OCI-LY7 (cell line): ENCODE measurements at regions of chr13 and their contacts with region 1.

Region 1: DNA sequence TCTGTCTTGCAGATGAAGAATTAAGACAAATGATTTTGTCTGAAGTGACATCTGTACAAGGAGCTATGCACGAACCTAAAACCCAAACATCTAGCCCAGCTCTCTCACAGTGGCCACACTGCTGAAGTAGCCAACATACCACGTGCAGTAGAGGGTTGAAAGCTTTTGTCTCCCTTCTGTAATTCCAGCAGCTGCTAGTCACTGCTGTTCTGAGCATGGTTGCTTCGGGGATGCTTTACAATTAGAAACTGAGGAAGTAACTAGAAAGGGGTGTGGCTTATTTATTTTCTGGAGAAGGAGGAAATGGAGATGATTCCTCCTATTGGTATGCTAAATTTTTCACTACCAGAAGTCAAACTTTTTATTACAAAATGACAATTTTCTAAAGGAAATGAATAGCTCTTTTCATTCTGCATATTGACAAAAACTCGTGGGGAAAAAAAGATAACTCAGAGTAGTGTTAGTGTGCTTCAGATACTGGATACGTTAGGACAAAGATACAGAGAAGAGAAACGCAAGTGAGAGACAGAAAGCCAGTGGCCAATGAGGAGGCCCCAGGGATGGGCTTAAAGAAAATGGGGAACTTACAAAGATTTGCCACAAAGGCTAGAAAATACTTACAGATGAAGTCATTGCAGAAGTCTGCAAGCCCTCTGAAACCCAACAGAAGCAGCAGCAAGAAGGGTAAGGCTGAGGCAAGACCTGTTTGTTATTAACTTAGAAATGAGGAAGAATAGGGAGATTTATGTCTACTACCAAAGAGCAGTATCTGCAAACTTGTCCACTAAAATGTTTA is 192.7 kb upstream of the MIR17HG start:
- DNase-seq: no peak
- H3K4me3 ChIP-seq: no peak overlapping the region
- H3K27ac ChIP-seq: no peak overlapping the region
- H3K4me1 ChIP-seq: no peaks in the 10 kb centered on the region
- CTCF ChIP-seq: no peak

Region 2: DNA sequence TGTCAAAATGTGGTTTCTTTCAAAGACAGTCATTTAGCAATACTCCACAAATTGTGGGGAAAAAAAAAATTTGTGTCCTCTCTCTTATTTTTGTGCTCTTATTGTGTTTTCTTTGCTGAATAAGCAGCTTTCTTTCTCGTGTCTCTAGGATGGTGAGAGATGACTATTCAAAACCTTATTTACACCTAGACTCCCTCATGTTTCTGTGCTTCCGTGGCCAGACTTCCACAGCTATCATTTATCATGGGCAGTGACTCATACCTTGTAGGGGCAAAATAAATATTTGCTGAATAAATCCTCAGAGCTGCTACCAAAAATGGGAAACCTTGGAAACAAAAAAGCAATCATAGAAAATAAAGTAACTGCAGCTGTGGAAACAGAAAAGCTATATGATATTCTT is 12.2 kb before region 1 on chr13:
- CTCF ChIA-PET with region 1: interaction called, 3 read pairs
- POLR2A ChIA-PET with region 1: interaction called, 25 read pairs
- intact Hi-C with region 1: no loop called
- DNase-seq: no peak
- H3K4me3 ChIP-seq: no peak overlapping the region
- H3K27ac ChIP-seq: no peak overlapping the region
- H3K4me1 ChIP-seq: no peaks in the 10 kb centered on the region
- CTCF ChIP-seq: no peak

Region 3: DNA sequence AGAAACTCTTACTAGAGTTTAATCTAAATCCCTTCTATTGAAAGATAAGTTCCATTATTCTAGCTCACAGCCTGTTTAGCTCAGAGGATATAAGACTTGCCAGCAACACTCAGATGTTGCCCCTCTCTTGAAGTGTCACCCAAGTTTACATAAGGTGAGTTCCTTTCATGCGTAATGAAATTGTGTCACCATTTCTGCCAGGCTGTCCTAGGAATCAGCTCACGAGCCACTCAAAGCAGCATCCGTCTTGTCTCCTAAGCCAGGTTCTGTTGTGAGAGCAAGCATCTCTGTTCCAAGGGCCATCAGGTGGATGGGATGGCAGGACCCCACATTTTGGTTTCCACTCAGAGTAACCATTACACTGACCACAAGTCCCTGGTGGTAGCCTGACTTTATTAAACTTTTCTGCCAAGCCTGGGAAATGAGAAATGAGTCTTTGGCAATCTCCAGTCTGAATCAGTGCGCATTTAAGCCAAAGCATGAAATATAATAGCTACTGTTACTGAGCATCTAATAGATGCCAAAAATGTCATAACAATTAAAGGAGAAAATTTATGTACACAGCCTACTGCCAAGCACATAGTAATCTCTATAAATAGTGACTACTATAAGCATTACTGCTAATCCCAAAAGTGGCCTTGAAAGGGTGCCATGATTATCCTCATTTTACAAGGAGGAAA is 13.1 kb after region 1 on chr13:
- CTCF ChIA-PET with region 1: no interaction called
- POLR2A ChIA-PET with region 1: interaction called, 30 read pairs
- intact Hi-C with region 1: no loop called
- DNase-seq: no peak
- H3K4me3 ChIP-seq: no peak overlapping the region
- H3K27ac ChIP-seq: no peak overlapping the region
- H3K4me1 ChIP-seq: no peaks in the 10 kb centered on the region
- CTCF ChIP-seq: no peak